ENCODE measurements at regions of chr19 and their contacts with region 1.

Region 1: DNA sequence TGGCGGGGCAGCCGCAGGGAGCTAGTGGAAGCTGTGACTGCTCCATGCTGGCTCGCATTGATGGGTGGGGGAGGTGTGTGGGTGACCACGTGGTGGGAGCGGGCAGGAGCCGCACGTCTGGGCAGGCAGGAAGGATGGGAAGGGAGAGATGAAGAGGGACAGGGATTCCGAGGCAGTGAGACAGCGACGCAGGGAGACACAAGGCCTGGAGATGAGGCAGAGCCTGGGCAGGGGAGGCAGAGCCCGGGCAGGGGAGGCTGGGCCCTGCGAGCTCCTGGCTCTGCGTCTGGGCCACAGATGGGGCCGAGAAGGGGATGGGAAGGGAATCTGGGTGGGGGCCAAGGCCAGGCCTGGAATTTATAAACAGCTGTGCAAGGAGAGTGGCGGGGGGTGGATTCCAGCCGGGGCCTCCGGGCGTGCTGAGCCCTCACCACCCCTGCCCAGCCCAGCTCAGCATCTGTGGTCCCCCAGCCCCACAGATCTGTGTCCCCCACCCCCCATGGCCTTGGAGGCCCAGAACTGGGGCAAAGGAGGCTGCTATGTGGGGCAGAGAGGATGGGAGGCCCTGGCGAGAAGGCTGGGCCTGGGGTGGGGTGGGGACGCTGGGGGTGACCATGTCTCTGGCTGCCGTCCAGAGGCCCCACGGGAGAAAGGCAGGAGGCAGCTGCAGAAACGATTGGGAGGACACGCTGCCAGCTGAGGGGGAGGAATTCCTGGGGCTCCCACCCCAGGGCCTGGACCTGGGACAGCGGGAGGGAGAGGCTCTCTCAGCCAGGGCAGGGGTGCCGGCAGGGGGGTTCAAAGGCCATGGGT is 6.0 kb downstream of the EHD2 start:
- DNase-seq: peak; percentile 99
- ATAC-seq: peak; percentile 85
- H3K4me3 ChIP-seq: 0 out of 2 replicates have a peak overlapping the region, but pooled peaks have one; percentile 7
- H3K27ac ChIP-seq: peak overlapping the region; percentile 97
- H3K4me1 ChIP-seq: peaks cover 39% of the 10 kb centered on the region
- H3K27me3 ChIP-seq: no peaks in the 10 kb centered on the region
- CTCF ChIP-seq: no peak
- POLR2A ChIP-seq: no peak
- RAD21 ChIP-seq: peak; percentile 26; the same call in 1 of the 2 replicates

Region 2: GRCh38 chr19:47729992-47730889 is 11.0 kb after region 1 on chr19:
- CTCF ChIA-PET with region 1: no interaction called
- POLR2A ChIA-PET with region 1: interaction called, 36 read pairs
- dilution Hi-C with region 1: no loop called
- in situ Hi-C with region 1: no loop called
- intact Hi-C with region 1: no loop called
- DNase-seq: no peak
- ATAC-seq: no peak
- H3K4me3 ChIP-seq: no peak overlapping the region
- H3K27ac ChIP-seq: peak overlapping the region; percentile 60
- H3K4me1 ChIP-seq: peaks cover 19% of the 10 kb centered on the region
- H3K27me3 ChIP-seq: no peaks in the 10 kb centered on the region
- CTCF ChIP-seq: no peak
- POLR2A ChIP-seq: no peak
- RAD21 ChIP-seq: no peak